Heart right ventricle (tissue), 16 donors: ENCODE measurements at regions of chr21 and their contacts with region 1.

Region 1: GRCh38 chr21:27570306-27570868 is 603.5 kb upstream of the ADAMTS5 start:
- DNase-seq: peak; percentile 31 to 69
- ATAC-seq: peak; percentile 44 to 93 (median 90)
- H3K4me3 ChIP-seq: no peak overlapping the region
- H3K27ac ChIP-seq: peak overlapping the region in 6 of 10 donors; percentile 20 to 55 (median 42)
- H3K4me1 ChIP-seq: peaks cover 0 to 20% (median 7%) of the 10 kb centered on the region in 9 donors
- H3K27me3 ChIP-seq: no peaks in the 10 kb centered on the region
- CTCF ChIP-seq: no peak

Region 2: DNA sequence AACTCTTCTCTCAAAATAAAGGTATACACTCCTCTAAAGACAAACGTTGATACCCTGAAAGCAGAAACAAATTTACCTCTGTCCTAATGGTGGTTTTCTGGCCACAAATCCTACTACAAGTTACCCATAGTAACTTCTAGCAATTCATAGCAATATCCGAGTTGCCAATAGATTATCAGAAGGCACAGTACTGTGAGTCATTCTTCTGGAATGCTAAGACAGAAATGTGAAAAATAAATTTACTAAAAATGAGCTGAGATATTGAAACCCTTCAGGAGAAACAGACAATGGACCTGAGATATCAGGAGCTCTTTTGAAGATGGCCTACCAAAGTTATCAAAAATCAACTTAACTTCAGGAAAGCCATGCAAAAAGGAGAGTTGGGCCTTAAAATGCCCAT is 111.5 kb after region 1 on chr21:
- intact Hi-C with region 1: loop called in 1 of 10 experiments (anchors 10 kb)
- DNase-seq: no peak
- ATAC-seq: no peak
- H3K4me3 ChIP-seq: no peak overlapping the region
- H3K27ac ChIP-seq: no peak overlapping the region
- H3K4me1 ChIP-seq: peaks cover 0 to 3% (median 0%) of the 10 kb centered on the region in 9 donors
- H3K27me3 ChIP-seq: no peaks in the 10 kb centered on the region
- CTCF ChIP-seq: no peak

Region 3: GRCh38 chr21:27694667-27695066 is 124.3 kb after region 1 on chr21:
- intact Hi-C with region 1: loop called in 3 of 10 experiments (anchors 5 to 10 kb)
- DNase-seq: no peak
- ATAC-seq: no peak
- H3K4me3 ChIP-seq: no peak overlapping the region
- H3K27ac ChIP-seq: no peak overlapping the region
- H3K4me1 ChIP-seq: no peaks in the 10 kb centered on the region
- H3K27me3 ChIP-seq: no peaks in the 10 kb centered on the region
- CTCF ChIP-seq: no peak